Sciatic nerve (tissue), 2 donors: ENCODE measurements at regions of chr19 and their contacts with region 1.

Region 1: DNA sequence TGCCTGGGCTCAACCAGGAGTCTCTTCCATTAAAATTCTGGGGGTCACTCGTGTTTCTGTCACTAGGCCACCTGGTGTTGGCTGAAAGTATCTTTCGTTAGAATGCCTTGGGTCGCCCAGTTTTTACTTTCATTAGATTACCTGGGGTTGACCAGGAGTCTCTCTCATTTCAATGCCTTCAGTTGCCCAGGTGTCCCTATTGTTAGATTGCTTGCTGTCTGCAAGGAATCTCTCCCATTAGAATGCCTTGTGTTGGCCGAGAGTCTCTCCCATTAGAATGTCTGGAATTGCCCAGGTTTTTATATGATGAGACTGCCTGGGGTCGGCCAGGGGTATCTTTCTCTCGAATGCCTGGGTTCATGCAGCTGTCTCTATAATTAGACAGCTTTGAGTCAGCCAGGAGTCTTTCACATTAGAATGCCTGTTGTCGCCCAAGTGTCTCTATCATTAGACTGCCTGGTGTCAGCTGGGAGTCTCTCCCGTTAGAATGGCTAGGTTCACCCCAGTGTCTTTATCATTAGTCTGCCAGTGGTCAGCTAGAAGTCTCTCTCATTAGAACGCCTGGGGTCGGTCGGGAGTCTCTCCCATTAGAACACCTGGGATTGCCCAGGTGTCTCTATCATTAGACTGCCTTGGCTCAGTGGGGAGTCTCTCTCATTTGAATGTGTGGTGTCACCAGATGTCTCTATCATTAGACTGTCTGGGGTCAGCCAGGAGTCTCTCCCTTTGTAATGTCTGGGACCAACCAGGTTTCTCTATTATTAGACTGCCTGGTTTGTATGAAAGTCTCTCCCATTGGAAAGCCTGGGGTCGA is 1446.8 kb downstream of the UQCRFS1 start:
- DNase-seq: no peak
- ATAC-seq: no peak

Region 2: DNA sequence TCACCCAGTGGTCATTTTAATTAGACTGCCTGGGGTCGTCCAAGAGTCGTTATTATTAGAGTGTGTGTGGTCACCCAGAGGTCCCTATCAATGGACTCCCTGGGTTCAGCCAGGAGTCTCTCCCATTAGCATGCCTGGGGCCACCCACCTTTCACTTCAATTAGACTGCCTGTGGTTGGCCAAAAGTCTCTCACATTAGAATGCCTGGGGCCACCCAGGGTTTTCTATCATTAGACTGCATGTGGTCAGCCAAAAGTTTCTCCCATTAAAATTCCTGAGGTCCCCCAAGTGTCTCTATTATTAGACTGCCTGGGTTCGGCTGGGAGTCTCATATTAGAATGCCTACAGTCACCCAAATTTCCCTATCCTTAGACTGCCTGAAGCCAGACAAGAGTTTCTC is 25.7 kb before region 1 on chr19:
- intact Hi-C with region 1: loop called (anchors 1 kb)
- DNase-seq: peak; percentile 2
- ATAC-seq: no peak

Region 3: DNA sequence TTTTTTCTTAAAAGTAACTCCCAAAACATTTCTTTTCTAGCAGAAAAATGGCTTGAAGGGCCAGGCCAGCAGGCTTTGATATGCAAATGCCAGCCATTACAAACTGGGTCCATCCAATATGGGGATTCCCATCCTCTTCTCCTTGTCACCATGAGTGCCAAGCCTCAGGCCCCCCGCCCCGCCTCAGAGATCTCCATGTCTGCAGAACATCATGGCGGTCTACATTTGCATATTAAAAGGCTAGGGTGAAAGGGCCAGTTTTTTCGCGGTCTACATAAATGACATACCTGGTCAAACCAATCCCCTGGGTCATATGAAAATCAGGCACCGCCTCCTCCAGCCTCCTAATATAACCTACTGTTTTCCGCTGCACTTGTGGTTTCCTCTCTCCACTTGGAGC is 119.2 kb after region 1 on chr19:
- intact Hi-C with region 1: no loop called
- DNase-seq: no peak
- ATAC-seq: no peak